Calu3 (cell line): ENCODE measurements at regions of chr12 and their contacts with region 1.

Region 1: DNA sequence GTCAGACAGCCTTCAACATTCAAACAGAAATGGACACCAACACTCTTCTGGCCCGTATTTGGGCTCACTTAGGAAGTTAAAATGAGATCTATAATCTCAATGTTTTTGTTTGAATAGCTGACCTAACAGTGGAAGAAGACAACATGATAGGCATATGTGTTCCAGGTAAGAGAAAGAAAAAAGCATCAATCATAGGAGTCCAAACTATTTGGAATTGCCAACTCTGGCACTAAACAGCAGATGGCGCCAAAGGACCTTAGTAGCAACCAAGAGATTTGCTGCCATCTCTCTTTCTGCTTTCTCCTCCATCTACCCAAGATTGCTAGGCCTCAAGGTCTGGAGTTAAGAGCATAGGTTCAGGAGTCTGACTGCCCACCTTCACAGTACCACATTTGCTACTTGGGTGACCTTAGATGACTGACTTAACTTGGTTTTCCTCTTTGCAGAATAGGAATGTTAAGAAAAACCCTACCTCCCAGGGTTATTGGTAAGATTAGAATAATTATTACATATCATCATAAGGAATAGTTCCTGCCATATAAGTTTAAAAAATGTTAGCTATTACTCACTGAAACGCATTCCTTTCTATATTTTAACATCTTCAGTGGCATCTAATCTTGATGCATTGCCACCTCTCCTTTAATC is 30.2 kb downstream of the PEX5 start:
- DNase-seq: peak; percentile 72
- H3K4me3 Mint-ChIP-seq: no peak overlapping the region
- H3K27ac Mint-ChIP-seq: no peak overlapping the region
- H3K4me1 Mint-ChIP-seq: no peaks in the 10 kb centered on the region
- H3K27me3 Mint-ChIP-seq: no peaks in the 10 kb centered on the region
- CTCF ChIP-seq: peak; percentile 78

Region 2: GRCh38 chr12:7374423-7375144 is 154.9 kb after region 1 on chr12:
- CTCF ChIA-PET with region 1: no interaction called
- intact Hi-C with region 1: loop called (anchors 5 kb)
- DNase-seq: peak; percentile 69
- H3K4me3 Mint-ChIP-seq: no peak overlapping the region
- H3K27ac Mint-ChIP-seq: no peak overlapping the region
- H3K4me1 Mint-ChIP-seq: peaks cover 17% of the 10 kb centered on the region
- H3K27me3 Mint-ChIP-seq: no peaks in the 10 kb centered on the region
- CTCF ChIP-seq: peak; percentile 65

Region 3: DNA sequence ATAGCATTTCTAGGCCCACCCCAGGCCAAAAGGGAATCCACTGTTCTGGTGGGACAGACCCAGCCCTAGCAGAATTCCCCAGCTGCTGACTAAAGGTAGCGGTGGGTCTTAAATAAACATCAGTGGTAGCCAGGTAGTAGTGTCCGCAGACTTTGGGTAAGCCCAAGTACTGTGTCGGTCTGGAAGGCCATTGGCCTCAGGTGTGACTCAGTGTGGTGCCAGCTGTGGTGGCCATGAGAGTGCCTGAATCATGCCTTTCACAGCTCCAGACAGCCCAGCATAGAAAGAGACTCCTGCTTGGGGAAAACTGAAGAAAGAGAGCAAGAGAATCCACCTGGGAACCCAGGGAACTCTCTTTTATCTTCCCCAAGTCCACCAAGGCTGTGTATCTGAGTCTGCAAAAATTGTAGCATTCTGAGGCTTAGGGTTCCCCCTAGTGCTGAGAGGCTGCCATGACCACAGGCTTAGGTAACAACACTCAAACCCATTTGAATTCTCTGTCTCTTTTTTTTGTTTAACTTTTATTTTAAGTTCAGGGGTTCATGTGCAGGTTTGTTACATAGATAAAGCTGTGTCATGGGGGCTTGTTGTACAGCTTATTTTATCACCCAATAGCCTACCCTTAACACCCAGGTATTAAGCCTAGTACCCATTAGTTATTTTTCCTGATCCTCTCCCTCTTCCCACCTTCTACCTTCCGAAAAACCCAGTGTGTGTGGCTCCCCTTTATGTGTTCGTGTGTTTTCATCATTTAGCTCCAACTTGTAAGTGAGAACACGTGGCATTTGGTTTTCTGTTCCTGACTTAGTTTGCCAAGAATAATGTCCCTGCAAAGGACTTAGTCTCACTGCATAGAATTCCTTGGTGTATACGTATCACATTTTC is 240.9 kb after region 1 on chr12:
- CTCF ChIA-PET with region 1: no interaction called
- intact Hi-C with region 1: loop called (anchors 1 kb)
- DNase-seq: peak; percentile 66
- H3K4me3 Mint-ChIP-seq: no peak overlapping the region
- H3K27ac Mint-ChIP-seq: no peak overlapping the region
- H3K4me1 Mint-ChIP-seq: no peaks in the 10 kb centered on the region
- H3K27me3 Mint-ChIP-seq: no peaks in the 10 kb centered on the region
- CTCF ChIP-seq: peak; percentile 88

Region 4: GRCh38 chr12:7758758-7759140 is 539.0 kb after region 1 on chr12:
- CTCF ChIA-PET with region 1: no interaction called
- intact Hi-C with region 1: no loop called
- DNase-seq: no peak
- H3K4me3 Mint-ChIP-seq: no peak overlapping the region
- H3K27ac Mint-ChIP-seq: no peak overlapping the region
- H3K4me1 Mint-ChIP-seq: no peaks in the 10 kb centered on the region
- H3K27me3 Mint-ChIP-seq: peaks cover 12% of the 10 kb centered on the region
- CTCF ChIP-seq: no peak